CD4-positive, alpha-beta T cell (primary cell): ENCODE measurements at regions of chr12 and their contacts with region 1.

Region 1: GRCh38 chr12:48681738-48682532 is at the start of gene KANSL2:
- DNase-seq: peak; percentile 94 to 99 (median 96)
- ATAC-seq: peak; percentile 94
- H3K4me3 ChIP-seq: peak within 1 kb of the TSS; percentile 90
- H3K4me3 Mint-ChIP-seq: peak within 1 kb of the TSS; percentile 91
- H3K27ac ChIP-seq: peak within 1 kb of the TSS; percentile 84 to 90
- H3K27ac Mint-ChIP-seq: peak within 1 kb of the TSS; percentile 97
- H3K4me1 ChIP-seq: peaks cover 37% of the 10 kb centered on the region
- H3K4me1 Mint-ChIP-seq: peaks cover 52% of the 10 kb centered on the region
- H3K27me3 ChIP-seq: no peaks in the 10 kb centered on the region
- H3K27me3 Mint-ChIP-seq: no peaks in the 10 kb centered on the region
- CTCF ChIP-seq: no peak
- total RNA-seq, gene KANSL2: 142 to 144 TPM

Region 2: GRCh38 chr12:48671231-48671856 is 10.6 kb before region 1 on chr12:
- CTCF ChIA-PET with region 1: interaction called, 5 read pairs
- POLR2A ChIA-PET with region 1: interaction called, 35 read pairs
- intact Hi-C with region 1: no loop called
- DNase-seq: no peak
- ATAC-seq: no peak
- H3K4me3 ChIP-seq: no peak overlapping the region
- H3K4me3 Mint-ChIP-seq: no peak overlapping the region
- H3K27ac ChIP-seq: no peak overlapping the region
- H3K27ac Mint-ChIP-seq: no peak overlapping the region
- H3K4me1 ChIP-seq: peaks cover 12% of the 10 kb centered on the region
- H3K4me1 Mint-ChIP-seq: peaks cover 22% of the 10 kb centered on the region
- H3K27me3 ChIP-seq: no peaks in the 10 kb centered on the region
- H3K27me3 Mint-ChIP-seq: no peaks in the 10 kb centered on the region
- CTCF ChIP-seq: no peak

Region 3: GRCh38 chr12:48716493-48717251 is 34.7 kb after region 1 on chr12 and contains the start of gene CCNT1:
- CTCF ChIA-PET with region 1: no interaction called
- POLR2A ChIA-PET with region 1: interaction called, 30 read pairs
- intact Hi-C with region 1: loop called (anchors 1 kb)
- DNase-seq: peak; percentile 94 to 100 (median 97)
- ATAC-seq: peak; percentile 87
- H3K4me3 ChIP-seq: peak within 1 kb of the TSS; percentile 84
- H3K4me3 Mint-ChIP-seq: peak within 1 kb of the TSS; percentile 88
- H3K27ac ChIP-seq: peak within 1 kb of the TSS; percentile 97 to 99
- H3K27ac Mint-ChIP-seq: peak within 1 kb of the TSS; percentile 91
- H3K4me1 ChIP-seq: peaks cover 37% of the 10 kb centered on the region
- H3K4me1 Mint-ChIP-seq: peaks cover 41% of the 10 kb centered on the region
- H3K27me3 ChIP-seq: no peaks in the 10 kb centered on the region
- H3K27me3 Mint-ChIP-seq: no peaks in the 10 kb centered on the region
- CTCF ChIP-seq: no peak
- total RNA-seq, gene CCNT1: 150 TPM